ENCODE measurements at regions of chr4 and their contacts with region 1.

Region 1: DNA sequence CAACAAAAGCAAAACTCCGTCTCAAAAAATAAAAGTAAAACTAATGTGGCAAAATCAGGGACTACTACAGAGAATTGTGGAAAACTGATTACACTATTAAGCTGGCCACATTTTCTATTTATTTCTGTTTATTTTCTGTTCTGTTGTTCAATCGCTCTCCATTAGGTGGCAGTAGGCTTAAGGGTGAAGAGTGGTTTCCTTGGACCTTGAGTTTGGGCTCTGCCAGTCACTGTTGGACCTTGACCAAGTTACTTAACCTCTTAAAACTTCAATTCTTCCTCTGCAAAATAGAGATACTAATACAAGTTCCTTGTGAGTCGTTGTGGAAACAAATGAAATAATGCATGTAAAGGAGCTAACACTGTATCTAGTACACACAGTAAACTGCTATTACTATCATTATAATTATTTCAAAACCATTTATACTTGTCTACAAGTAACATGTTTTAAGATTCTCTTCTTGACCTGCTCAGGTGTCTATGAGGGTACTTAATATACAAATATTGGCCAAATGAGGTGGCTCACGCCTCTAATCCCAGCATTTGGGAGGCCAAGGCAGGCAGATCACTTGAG is 15.2 kb downstream of the HSD17B11 start:
- DNase-seq: no peak
- ATAC-seq: peak; percentile 78

Region 2: DNA sequence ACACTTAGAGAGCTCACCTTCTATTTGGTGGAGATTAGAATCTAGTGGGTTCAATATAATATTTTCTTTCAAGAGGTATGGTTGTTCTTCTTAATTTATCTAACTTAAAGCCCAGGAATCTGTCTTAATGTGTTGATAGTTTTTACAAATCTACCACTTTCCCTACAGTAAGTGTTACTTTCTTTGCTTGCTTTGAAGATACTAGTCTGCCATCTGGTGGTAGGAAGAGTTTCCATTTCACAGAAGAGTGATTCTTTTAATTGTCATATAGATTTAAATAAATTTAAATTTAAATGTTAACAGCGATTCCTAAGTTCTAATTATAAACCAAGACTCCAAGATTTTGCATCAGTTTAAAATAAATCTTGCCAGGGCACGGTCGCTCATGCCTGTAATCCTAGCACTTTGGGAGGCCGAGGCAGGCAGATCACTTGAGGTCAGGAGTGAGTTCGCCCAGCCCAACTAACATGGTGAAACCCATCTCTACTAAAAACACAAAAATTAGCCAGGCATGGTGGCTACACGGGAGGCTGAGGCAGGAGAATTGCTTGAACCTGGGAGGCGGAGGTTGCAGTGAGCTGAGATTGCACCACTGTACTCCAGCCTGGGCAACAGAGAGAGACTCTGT is 90.0 kb after region 1 on chr4:
- intact Hi-C with region 1: loop called (anchors 1 kb)
- DNase-seq: no peak
- ATAC-seq: no peak

Region 3: DNA sequence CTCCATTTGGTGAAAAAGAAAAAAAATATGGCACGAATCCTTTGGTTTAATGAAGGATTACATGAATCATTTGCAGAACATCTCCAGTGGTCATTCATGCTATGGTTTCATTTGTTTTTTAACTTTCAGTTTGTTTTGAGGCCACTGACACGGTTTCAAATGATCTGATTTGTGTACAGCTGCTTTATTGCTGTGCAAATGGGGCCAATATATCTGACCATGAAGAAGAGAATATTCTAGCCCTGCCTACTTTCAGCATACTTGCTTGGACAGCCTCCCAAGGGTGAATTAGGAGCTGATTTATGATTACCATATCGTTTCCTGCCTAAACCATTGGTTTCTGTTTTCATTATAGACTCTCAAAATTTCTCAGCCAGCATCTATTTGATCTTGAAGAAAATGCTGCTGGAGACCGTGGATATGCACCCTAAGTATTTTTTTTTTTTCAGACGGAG is 122.7 kb after region 1 on chr4:
- intact Hi-C with region 1: no loop called
- DNase-seq: no peak
- ATAC-seq: no peak

Region 4: DNA sequence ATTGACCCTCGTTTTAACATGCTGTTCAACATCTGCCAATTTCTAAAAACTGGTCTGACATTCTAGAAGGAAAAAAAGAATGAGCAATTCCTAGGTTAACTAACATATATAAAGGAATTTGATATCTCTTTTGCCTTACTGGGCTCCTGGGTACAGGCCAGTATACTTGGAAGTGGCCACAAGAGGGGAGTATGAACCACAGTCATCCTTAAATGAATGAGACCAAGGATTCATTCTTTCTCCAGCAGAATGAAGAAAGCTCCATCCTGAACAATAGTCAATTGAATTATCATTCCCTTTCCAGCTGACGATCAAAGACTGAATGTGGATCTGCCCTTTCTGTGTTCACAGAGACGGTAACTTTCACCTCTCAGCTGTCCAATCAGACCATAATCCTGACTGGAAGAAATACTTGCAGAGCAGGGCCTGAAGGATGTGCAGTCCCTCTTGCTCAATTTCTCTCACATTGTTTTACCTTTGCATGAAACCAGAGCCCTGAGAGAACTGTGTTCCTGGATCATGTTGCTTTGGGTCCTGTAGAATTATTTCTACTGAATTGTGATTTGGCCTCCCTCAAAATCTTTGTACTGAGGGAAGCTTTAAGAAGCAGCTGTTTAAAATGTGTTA is 168.1 kb after region 1 on chr4:
- intact Hi-C with region 1: loop called (anchors 10 kb)
- DNase-seq: no peak
- ATAC-seq: peak; percentile 39

Region 5: GRCh38 chr4:88211473-88212252 is 835.9 kb after region 1 on chr4:
- intact Hi-C with region 1: loop called (anchors 10 kb)
- DNase-seq: no peak
- ATAC-seq: no peak

Measured in Right ventricle myocardium inferior (tissue), 1 donor.